ENCODE measurements at regions of chr20 and their contacts with region 1.

Region 1: GRCh38 chr20:49397525-49397924 is 84.9 kb downstream of the KCNB1 start:
- DNase-seq: no peak

Region 2: GRCh38 chr20:49338061-49338460 is 59.5 kb before region 1 on chr20:
- intact Hi-C with region 1: loop called in 1 of 2 experiments (anchors 10 kb)
- DNase-seq: peak; percentile 57

Region 3: DNA sequence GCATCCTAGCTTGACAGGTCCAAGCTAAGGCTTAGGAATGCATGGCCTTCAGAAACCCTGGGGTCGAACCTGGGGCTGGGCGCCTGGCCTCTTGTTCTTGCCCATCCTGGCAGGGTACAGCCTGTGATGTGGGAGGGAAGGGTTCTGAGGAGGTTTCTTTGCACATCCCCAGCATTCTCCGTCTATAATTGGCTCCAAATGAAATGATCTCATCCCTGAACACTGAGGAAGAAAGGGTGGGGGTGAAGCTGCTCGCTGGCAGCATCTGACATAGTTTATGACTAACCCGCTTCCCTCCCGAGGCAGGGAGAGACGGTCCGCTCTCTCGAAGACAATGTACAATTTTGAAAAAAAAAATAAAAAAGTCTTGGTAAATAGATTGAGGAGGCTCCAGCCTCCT is 52.5 kb before region 1 on chr20:
- intact Hi-C with region 1: loop called in 1 of 2 experiments (anchors 5 kb)
- DNase-seq: peak; percentile 86

Region 4: GRCh38 chr20:49446808-49447207 is 49.3 kb after region 1 on chr20:
- intact Hi-C with region 1: loop called (anchors 5 kb)
- DNase-seq: peak; percentile 96

Region 5: DNA sequence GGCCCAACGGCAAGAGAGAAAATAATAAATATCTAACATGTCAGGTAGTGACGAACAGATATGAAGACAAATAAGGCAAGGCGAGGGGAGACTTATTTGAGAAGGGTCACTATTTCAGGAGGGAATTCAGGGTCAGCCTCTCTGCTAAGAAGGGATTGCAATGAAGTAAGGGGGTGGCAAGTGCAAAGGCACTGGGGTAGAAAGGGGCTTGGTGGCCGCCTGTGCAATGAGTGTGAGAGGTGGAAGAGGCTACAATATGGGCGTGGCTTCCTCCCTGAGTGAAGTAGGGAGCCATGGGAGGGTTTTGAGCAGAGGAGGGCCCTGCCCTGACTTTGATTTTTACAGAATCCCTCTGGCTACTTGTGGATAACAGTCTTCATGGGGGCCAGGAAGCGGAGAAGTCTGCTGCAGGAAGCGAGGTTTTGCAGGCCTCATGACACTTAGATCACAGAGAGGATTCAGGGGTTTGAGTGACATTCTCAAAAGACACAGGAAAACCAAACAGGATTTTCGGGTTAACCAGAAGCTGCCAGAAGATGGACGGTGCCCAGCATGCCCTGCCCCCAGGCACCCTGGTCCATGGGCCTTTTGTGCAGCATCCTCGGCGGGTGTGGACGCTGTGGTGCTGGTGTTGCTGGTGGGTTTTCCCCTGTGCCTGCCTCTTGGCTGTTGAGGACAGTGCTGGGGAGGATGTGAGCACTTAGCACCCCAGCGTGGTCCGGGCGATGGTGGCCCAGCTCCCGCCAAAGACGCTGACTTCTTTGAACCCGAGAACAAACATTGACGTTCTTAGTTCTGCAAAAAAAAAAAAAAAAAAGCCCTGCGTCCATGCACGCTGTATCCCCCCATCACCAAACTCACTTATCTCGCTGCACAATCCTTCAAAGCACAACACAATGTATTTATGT is 988.5 kb after region 1 on chr20:
- intact Hi-C with region 1: no loop called
- DNase-seq: no peak